ENCODE measurements at regions of chr5 and their contacts with region 1.

Region 1: GRCh38 chr5:161975350-161975749 is 92.2 kb upstream of the GABRG2 start:
- DNase-seq: no peak
- ATAC-seq: no peak
- H3K4me3 Mint-ChIP-seq: no peak overlapping the region
- H3K27ac Mint-ChIP-seq: no peak overlapping the region
- H3K4me1 Mint-ChIP-seq: no peaks in the 10 kb centered on the region
- H3K27me3 Mint-ChIP-seq: no peaks in the 10 kb centered on the region
- CTCF ChIP-seq: no peak

Region 2: DNA sequence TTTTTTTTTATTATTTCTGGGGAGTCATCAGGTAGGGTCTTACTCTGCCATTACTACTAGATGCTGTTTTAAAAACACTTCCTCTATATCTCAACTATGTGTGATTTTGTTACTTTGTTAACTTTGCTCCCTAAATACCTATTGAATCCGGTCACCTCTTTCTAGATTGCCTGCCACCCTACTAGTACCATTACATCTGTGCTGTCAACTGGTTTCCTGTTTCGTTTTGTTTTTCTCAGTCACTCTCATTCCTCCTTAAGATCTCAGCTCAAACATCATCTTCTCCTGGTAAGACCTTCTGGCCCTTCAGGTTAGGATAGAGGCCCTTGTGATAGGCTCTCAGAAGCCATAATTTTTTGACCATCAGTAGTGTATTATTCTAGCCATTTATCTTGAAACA is 799.1 kb before region 1 on chr5:
- CTCF ChIA-PET with region 1: no interaction called
- POLR2A ChIA-PET with region 1: no interaction called
- intact Hi-C with region 1: no loop called
- DNase-seq: no peak
- ATAC-seq: no peak
- H3K4me3 Mint-ChIP-seq: no peak overlapping the region
- H3K27ac Mint-ChIP-seq: no peak overlapping the region
- H3K4me1 Mint-ChIP-seq: no peaks in the 10 kb centered on the region
- H3K27me3 Mint-ChIP-seq: no peaks in the 10 kb centered on the region
- CTCF ChIP-seq: no peak

Region 3: DNA sequence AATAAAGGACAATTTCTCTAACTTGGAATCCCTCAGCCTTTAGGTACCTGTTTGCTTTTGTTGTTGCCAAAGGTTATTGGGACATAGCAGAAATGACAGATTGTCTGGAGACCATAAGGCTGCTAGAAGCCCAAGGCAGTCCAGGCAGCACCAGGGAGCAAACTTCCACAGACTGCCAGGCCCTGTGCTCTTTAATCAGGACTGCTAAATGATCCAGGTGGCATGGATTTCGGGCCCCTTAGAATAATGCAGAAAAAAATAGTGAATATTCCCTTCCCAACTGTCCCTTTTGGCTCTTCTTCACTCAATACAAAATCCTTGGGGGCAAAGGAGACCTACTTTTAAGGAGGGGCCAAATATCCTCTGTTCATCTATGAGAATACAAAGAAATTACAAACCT is 53.6 kb before region 1 on chr5:
- CTCF ChIA-PET with region 1: no interaction called
- POLR2A ChIA-PET with region 1: no interaction called
- intact Hi-C with region 1: loop called (anchors 2 kb)
- DNase-seq: no peak
- ATAC-seq: no peak
- H3K4me3 Mint-ChIP-seq: no peak overlapping the region
- H3K27ac Mint-ChIP-seq: no peak overlapping the region
- H3K4me1 Mint-ChIP-seq: no peaks in the 10 kb centered on the region
- H3K27me3 Mint-ChIP-seq: no peaks in the 10 kb centered on the region
- CTCF ChIP-seq: no peak